ENCODE measurements at regions of chr6 and their contacts with region 1.

Region 1: GRCh38 chr6:2989332-2990247 is 10.1 kb upstream of the NQO2 start:
- DNase-seq: peak; percentile 81 to 94
- H3K4me3 ChIP-seq: peak overlapping the region; percentile 51 to 69
- H3K27ac ChIP-seq: peak overlapping the region; percentile 92 to 99
- H3K4me1 ChIP-seq: peaks cover 4 to 6% of the 10 kb centered on the region in 2 donors
- H3K27me3 ChIP-seq: no peaks in the 10 kb centered on the region
- CTCF ChIP-seq: peak in 1 of 4 experiments; percentile 4
- POLR2A ChIP-seq: peak; percentile 68 to 81

Region 2: GRCh38 chr6:3068329-3069214 is 79.0 kb after region 1 on chr6 and contains the start of gene RIPK1:
- intact Hi-C with region 1: loop called (anchors 5 kb)
- DNase-seq: peak; percentile 93 to 94
- H3K4me3 ChIP-seq: peak within 1 kb of the TSS; percentile 61 to 98
- H3K27ac ChIP-seq: peak within 1 kb of the TSS; percentile 97 to 100
- H3K4me1 ChIP-seq: peaks cover 0 to 4% of the 10 kb centered on the region in 2 donors
- H3K27me3 ChIP-seq: no peaks in the 10 kb centered on the region
- CTCF ChIP-seq: peak; percentile 39 to 51 (median 49)
- POLR2A ChIP-seq: peak; percentile 85 to 92
- total RNA-seq, gene RIPK1: 11.5 to 35.0 (median 30.1) TPM

Measured in uterus (tissue), 4 donors.